Activated CD4-positive, alpha-beta T cell treated with anti-CD3 and anti-CD28 coated beads for 36 hours (primary cell): ENCODE measurements at regions of chr9 and their contacts with region 1.

Region 1: DNA sequence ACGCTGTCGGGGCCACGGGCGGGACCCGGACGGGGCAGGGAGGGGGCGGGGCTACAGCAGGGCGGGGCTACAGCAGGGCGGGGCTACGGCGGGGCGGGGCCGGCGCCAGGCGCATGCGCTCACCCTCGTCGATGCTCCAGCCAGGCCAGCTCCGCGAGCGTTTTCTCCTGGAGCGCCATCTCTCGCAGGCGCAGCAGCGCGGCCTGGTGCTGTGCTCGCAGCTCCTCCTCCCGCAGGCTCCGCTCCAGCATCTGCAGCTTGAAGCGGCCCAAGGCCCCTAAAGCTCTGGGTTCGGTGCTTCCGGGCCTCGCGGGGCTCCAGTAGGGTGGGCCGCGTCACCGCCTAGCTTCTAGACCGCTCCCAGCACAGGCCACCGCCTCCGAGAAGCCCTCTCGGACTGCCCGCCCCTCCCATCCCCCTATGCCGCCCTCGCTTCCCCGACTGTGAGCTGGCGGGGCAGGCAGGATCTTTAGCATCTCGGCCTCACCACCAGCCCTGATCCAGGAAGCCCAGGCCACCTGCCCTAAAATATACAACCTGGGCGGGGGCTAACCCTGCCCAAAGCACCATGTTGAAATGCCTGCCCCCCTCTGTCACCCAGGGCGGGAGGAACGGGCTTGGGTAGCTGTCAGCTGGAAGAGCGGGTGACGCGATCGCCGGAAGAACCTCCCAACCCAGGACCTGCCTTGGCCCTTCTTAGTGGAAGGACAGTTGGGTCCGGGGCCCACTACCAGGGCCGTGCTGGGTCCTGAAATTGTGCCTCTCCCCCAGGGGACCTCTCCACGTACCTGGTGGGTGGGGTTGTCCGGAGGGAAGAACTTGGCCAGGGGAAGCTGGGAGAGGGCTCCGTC is 21.9 kb upstream of the QSOX2 start:
- DNase-seq: peak; percentile 92
- ATAC-seq: peak; percentile 99
- H3K4me3 Mint-ChIP-seq: peak overlapping the region; percentile 69
- H3K27ac Mint-ChIP-seq: peak overlapping the region; percentile 58
- H3K4me1 Mint-ChIP-seq: peaks cover 6% of the 10 kb centered on the region
- H3K27me3 Mint-ChIP-seq: no peaks in the 10 kb centered on the region

Region 2: GRCh38 chr9:135992486-135993408 is 274.7 kb before region 1 on chr9:
- CTCF ChIA-PET with region 1: no interaction called
- POLR2A ChIA-PET with region 1: no interaction called
- intact Hi-C with region 1: loop called in 1 of 2 experiments (anchors 1 kb)
- DNase-seq: peak; percentile 68
- ATAC-seq: peak; percentile 71
- H3K4me3 Mint-ChIP-seq: no peak overlapping the region
- H3K27ac Mint-ChIP-seq: no peak overlapping the region
- H3K4me1 Mint-ChIP-seq: peaks cover 17% of the 10 kb centered on the region
- H3K27me3 Mint-ChIP-seq: no peaks in the 10 kb centered on the region

Region 3: DNA sequence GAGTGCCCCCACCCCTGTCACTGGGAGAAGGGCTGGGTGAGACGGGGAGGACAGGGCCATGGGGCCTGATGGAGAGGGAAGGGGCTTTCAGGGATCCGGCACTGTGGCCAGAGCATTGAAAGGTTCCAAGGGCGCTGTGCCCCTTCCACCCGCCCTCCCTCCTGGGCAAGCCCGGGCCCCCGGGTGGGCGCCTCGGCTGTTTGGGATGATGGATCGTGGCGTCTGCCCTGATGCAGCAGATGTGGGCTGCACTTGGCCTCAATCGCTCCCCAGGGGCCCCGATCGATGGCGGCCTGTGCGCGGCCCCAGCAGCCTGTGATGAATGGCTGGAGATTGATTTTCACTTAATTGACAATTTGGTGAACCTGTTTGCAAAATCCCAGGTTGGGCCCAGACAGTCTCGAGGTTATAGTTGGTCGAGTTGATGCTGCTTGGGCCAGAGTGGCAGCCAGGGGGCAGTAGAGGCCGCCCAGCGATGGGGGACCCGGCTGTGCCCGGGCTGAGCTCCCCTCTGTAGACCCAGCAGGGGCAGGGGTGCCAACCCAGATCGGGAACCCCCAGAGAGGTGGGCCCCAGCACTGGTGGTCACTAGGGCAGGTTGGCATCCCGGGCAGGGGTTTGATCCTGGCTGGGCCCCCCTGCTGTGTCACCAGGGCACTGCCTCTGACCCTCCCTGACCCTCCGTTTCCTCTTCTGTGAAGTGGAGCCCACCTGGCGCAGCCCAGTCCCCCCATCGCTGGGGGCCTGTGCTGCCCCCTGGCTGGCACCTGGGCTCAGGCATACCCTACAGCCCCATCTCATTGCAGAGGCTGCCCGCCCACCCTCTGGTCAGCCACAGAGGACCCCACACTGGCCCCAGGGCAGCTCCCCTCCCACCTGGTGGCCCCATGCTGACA is 97.2 kb before region 1 on chr9:
- CTCF ChIA-PET with region 1: no interaction called
- POLR2A ChIA-PET with region 1: no interaction called
- intact Hi-C with region 1: loop called in 1 of 2 experiments (anchors 5 kb)
- DNase-seq: peak; percentile 80
- ATAC-seq: peak; percentile 88
- H3K4me3 Mint-ChIP-seq: no peak overlapping the region
- H3K27ac Mint-ChIP-seq: no peak overlapping the region
- H3K4me1 Mint-ChIP-seq: no peaks in the 10 kb centered on the region
- H3K27me3 Mint-ChIP-seq: peaks cover 6% of the 10 kb centered on the region

Region 4: GRCh38 chr9:136231478-136232297 is 35.8 kb before region 1 on chr9:
- CTCF ChIA-PET with region 1: interaction called, 3 read pairs
- POLR2A ChIA-PET with region 1: no interaction called
- intact Hi-C with region 1: loop called in 1 of 2 experiments (anchors 1 kb)
- DNase-seq: peak; percentile 66
- ATAC-seq: peak; percentile 81
- H3K4me3 Mint-ChIP-seq: peak overlapping the region; percentile 48
- H3K27ac Mint-ChIP-seq: peak overlapping the region; percentile 84
- H3K4me1 Mint-ChIP-seq: peaks cover 42% of the 10 kb centered on the region
- H3K27me3 Mint-ChIP-seq: no peaks in the 10 kb centered on the region

Region 5: GRCh38 chr9:136339173-136339957 is 71.9 kb after region 1 on chr9:
- CTCF ChIA-PET with region 1: no interaction called
- POLR2A ChIA-PET with region 1: no interaction called
- intact Hi-C with region 1: loop called in 1 of 2 experiments (anchors 1 kb)
- DNase-seq: peak; percentile 59
- ATAC-seq: no peak
- H3K4me3 Mint-ChIP-seq: no peak overlapping the region
- H3K27ac Mint-ChIP-seq: no peak overlapping the region
- H3K4me1 Mint-ChIP-seq: no peaks in the 10 kb centered on the region
- H3K27me3 Mint-ChIP-seq: no peaks in the 10 kb centered on the region

Region 6: GRCh38 chr9:136439550-136440408 is 172.3 kb after region 1 on chr9 and contains the start of gene INPP5E:
- CTCF ChIA-PET with region 1: no interaction called
- POLR2A ChIA-PET with region 1: no interaction called
- intact Hi-C with region 1: loop called in 1 of 2 experiments (anchors 1 kb)
- DNase-seq: peak; percentile 89
- ATAC-seq: peak; percentile 85
- H3K4me3 Mint-ChIP-seq: peak within 1 kb of the TSS; percentile 80
- H3K27ac Mint-ChIP-seq: no peak within 1 kb of the TSS
- H3K4me1 Mint-ChIP-seq: peaks cover 21% of the 10 kb centered on the region
- H3K27me3 Mint-ChIP-seq: no peaks in the 10 kb centered on the region
- total RNA-seq, gene INPP5E: 13.5 to 14.1 TPM